ENCODE measurements at regions of chr2 and their contacts with region 1.

Region 1: DNA sequence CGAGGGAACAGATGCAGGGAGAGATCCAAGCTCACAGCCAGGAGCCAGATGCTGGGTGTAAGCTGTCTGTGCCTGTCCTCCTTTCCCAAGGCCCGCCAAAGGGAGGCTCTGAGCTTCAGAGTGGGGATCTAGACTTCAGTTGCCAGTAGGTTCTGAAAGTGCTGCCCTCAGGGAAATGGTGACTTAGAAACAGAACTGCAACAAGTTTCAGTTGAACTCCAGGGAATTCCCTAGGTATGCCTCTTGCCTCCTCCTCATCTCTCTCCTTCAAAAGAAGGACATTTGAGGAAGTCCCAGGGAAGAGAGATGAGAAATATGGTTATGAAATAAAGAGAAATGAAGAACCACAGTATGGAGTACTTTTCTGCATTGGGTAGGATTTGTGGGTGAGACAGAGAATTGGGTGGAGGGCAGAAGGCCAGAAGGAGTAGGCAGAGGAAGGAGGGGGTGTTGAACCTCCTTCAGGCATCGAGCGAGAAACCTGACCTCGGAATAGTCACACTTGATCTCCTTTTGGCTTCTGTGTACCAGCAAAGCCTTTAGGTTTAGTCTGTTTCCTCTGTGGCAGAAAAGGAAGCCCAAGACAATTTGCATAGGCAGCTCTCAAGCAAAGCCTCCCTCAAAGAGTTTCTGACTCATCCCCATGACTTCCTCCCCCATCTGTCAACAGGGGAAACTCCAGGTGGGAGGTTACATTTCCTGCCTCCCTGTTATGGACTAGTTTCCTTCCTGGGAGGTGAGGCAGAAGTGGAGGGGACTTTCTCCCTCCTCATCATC is 45.7 kb downstream of the QPCT start:
- DNase-seq: peak; percentile 41
- ATAC-seq: peak; percentile 92
- H3K4me3 Mint-ChIP-seq: peak overlapping the region; percentile 71
- H3K27ac Mint-ChIP-seq: no peak overlapping the region
- H3K4me1 Mint-ChIP-seq: peaks cover 3% of the 10 kb centered on the region
- H3K27me3 Mint-ChIP-seq: no peaks in the 10 kb centered on the region
- CTCF ChIP-seq: no peak

Region 2: GRCh38 chr2:36871068-36871707 is 519.0 kb before region 1 on chr2:
- CTCF ChIA-PET with region 1: no interaction called
- POLR2A ChIA-PET with region 1: no interaction called
- intact Hi-C with region 1: no loop called
- DNase-seq: no peak
- ATAC-seq: no peak
- H3K4me3 Mint-ChIP-seq: no peak overlapping the region
- H3K27ac Mint-ChIP-seq: no peak overlapping the region
- H3K4me1 Mint-ChIP-seq: no peaks in the 10 kb centered on the region
- H3K27me3 Mint-ChIP-seq: no peaks in the 10 kb centered on the region
- CTCF ChIP-seq: no peak

Region 3: GRCh38 chr2:37083873-37084794 is 306.0 kb before region 1 on chr2 and contains the starts of genes GPATCH11 and HEATR5B:
- CTCF ChIA-PET with region 1: no interaction called
- POLR2A ChIA-PET with region 1: no interaction called
- intact Hi-C with region 1: loop called (anchors 2 kb)
- DNase-seq: peak; percentile 83
- ATAC-seq: peak; percentile 83
- H3K4me3 Mint-ChIP-seq: no peak within 1 kb of the TSS
- H3K27ac Mint-ChIP-seq: no peak within 1 kb of the TSS
- H3K4me1 Mint-ChIP-seq: peaks cover 23% of the 10 kb centered on the region
- H3K27me3 Mint-ChIP-seq: no peaks in the 10 kb centered on the region
- CTCF ChIP-seq: no peak
- total RNA-seq, gene GPATCH11: 30.7 and 32.9 TPM in 2 replicates
- total RNA-seq, gene HEATR5B: 42.6 and 50.3 TPM in 2 replicates

Region 4: DNA sequence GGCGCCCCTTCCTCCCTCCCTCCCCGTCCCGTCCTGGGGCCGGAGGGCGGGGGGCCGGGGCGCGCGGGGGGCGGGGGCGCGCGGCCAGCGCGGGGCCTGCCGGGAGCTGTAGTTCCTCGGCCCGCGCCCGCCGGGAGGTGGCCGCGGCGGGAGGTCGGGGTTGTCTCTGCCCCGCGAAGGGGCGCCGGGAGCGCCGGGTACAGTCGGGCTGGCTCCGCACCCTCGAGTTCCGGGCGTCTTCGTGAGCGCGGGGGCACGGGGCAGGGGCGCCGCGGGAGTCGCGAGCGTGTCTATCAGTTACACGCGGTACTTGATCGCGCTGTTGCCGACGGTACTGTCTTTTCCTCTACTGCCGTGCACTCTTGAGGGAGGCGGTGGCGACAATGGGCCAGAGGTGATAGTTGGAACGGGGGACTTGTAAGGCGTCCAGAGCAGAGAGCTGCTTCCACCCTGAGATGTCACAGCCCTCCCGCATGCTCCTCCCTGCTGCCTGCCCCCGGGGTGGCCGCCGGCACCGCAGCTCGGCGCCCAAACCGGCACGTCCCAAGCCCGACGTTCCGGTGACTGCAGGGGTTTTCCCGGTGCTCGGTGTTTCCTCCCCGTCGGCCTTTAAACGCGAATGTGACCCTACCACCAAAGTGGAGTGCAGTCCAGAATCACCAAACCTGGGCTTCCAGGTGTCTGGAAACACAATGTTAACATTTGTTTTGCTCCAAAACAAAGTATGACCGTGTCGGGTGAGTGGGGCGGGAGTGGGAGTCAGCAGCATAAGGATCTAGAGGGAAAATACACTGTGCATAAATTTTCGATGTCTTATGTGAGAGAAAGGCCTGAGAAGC is 65.2 kb before region 1 on chr2 and contains the start of gene PRKD3:
- CTCF ChIA-PET with region 1: interaction called, 6 read pairs
- POLR2A ChIA-PET with region 1: interaction called, 37 read pairs
- intact Hi-C with region 1: loop called (anchors 1 kb)
- DNase-seq: peak; percentile 73
- ATAC-seq: peak; percentile 83
- H3K4me3 Mint-ChIP-seq: peak within 1 kb of the TSS; percentile 97
- H3K27ac Mint-ChIP-seq: peak within 1 kb of the TSS; percentile 96
- H3K4me1 Mint-ChIP-seq: peaks cover 38% of the 10 kb centered on the region
- H3K27me3 Mint-ChIP-seq: no peaks in the 10 kb centered on the region
- CTCF ChIP-seq: no peak
- total RNA-seq, gene PRKD3: 73.0 and 82.5 TPM in 2 replicates

Region 5: DNA sequence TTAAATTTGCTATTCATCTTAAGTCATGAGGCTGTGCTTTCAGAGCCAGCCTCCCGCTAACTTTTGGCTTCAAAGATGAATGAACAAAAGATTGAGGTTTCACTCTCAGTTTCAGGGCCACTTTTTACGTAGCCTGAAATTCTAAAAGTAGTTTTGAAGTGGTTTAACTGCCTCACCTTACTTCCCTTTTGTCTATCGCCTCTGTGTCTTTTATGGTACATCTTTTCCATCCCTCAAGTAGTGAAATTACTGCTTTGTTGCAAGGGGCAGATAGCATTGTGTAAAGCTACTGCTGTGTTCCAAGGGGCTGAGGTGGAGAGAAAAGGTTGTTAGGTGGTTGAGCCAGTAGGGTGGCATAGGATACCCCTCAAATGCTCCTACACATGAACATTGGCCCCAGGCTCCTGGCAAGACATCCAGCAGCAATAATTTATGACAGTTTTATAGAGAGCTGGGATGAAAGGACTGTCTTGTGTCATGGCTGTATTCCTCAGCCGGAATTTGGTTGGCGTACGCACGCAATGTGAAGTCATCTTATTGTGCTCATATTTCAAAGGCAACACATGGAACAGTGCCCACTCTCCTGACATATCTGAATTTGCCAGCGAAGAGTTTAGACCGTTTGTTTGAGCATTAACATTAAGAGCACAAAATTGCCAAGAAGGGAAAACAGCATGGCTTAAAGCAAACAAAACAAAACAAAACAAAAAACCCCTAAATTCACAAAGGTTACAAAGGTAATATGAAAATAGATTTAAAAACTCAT is 13.6 kb before region 1 on chr2:
- CTCF ChIA-PET with region 1: interaction called, 11 read pairs
- POLR2A ChIA-PET with region 1: interaction called, 102 read pairs
- intact Hi-C with region 1: loop called (anchors 1 kb)
- DNase-seq: no peak
- ATAC-seq: peak; percentile 71
- H3K4me3 Mint-ChIP-seq: peak overlapping the region; percentile 80
- H3K27ac Mint-ChIP-seq: peak overlapping the region; percentile 83
- H3K4me1 Mint-ChIP-seq: peaks cover 46% of the 10 kb centered on the region
- H3K27me3 Mint-ChIP-seq: no peaks in the 10 kb centered on the region
- CTCF ChIP-seq: no peak

Region 6: DNA sequence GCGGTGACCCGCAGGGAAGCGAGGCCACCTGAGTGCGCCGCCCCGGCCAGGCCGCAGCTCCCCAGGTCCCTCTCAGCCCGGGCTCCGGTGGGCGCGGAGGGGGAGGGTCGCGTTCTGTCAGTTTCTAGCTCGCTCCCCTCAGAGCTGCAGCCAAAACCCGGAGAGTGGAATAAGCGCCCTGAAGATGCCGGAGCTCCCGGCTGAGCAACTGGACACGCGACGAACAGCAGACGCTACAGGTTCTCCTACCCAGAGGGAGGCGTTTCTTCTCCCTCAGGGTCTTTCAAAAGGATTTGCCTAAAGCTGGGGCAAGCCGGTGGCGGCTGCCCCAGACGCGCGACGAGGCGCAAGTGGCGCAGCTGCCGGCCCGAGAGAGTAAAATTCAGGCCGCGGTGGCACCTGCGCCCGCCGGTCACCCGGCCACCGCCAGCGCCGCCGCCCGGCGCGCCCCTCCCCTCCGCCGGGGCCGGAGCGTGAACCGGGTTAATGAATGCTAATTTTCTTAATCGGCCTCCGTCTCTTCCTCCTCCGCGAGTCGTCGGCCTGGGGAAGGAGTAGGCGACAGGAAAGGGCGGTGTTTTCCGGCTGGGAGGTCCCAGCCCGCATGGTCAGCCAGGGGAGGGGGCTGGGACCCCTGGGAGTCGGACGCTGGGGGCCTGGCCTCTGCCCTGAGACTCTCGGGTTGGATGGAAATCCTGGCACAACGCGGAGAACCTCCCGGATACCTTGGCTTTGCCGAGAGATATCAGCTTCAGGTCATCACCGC is 282.1 kb after region 1 on chr2:
- CTCF ChIA-PET with region 1: no interaction called
- POLR2A ChIA-PET with region 1: interaction called, 3 read pairs
- intact Hi-C with region 1: loop called (anchors 5 kb)
- DNase-seq: peak; percentile 68
- ATAC-seq: peak; percentile 54
- H3K4me3 Mint-ChIP-seq: peak overlapping the region; percentile 90
- H3K27ac Mint-ChIP-seq: peak overlapping the region; percentile 84
- H3K4me1 Mint-ChIP-seq: peaks cover 50% of the 10 kb centered on the region
- H3K27me3 Mint-ChIP-seq: no peaks in the 10 kb centered on the region
- CTCF ChIP-seq: no peak

Region 7: DNA sequence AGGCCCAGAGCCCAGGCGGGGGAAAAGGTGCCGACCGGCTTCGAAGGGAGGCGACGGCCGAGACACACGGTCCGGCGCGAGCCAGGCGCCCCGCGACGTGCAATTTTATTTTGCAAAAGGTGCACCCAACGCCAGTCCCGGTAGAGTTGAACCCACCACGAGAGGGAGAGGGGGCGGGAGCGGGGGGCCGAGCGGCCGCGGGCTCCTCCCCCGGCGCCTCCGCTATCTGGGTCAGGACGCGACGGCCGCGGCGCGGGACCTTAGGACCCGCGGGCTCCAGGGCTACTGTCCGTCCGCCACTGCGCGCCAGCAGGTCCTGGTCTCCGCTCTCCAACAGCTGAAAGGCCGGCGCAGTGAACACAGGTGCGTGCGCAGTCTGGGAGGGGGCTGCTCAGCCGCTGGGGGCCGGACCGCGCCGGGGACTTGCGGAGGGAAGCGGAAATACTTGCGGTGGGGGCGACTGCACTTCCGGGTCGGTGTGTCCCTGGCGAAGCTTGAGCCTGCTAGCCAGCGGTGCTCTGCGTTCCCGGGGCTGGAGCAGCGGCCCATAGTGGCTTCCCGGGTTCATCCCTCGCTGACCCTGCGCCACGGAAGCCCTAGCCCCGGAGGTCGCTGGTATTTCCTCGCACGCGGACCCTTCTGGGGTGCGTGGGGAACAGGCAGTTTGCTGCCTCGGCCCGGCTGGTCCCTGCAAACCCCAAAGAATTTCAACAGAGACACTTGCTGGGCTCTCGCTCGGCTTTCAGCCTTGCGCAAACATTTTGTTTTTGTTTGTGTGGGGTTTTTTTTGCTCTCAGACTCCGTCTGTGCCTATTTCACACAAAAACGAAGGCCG is 535.1 kb after region 1 on chr2 and contains the start of gene RMDN2:
- CTCF ChIA-PET with region 1: no interaction called
- POLR2A ChIA-PET with region 1: interaction called, 9 read pairs
- intact Hi-C with region 1: loop called (anchors 1 kb)
- DNase-seq: peak; percentile 86
- ATAC-seq: peak; percentile 91
- H3K4me3 Mint-ChIP-seq: peak within 1 kb of the TSS; percentile 96
- H3K27ac Mint-ChIP-seq: peak within 1 kb of the TSS; percentile 93
- H3K4me1 Mint-ChIP-seq: peaks cover 28% of the 10 kb centered on the region
- H3K27me3 Mint-ChIP-seq: no peaks in the 10 kb centered on the region
- CTCF ChIP-seq: no peak
- total RNA-seq, gene RMDN2: 7.0 TPM in 2 replicates

Region 8: GRCh38 chr2:38508311-38509039 is 1118.3 kb after region 1 on chr2:
- CTCF ChIA-PET with region 1: no interaction called
- POLR2A ChIA-PET with region 1: no interaction called
- intact Hi-C with region 1: loop called (anchors 10 kb)
- DNase-seq: peak; percentile 46
- ATAC-seq: peak; percentile 79
- H3K4me3 Mint-ChIP-seq: no peak overlapping the region
- H3K27ac Mint-ChIP-seq: no peak overlapping the region
- H3K4me1 Mint-ChIP-seq: peaks cover 4% of the 10 kb centered on the region
- H3K27me3 Mint-ChIP-seq: no peaks in the 10 kb centered on the region
- CTCF ChIP-seq: no peak

Measured in activated B cell treated with CpG ODN at 0.5 μM for 24 hours (primary cell).